K562 (cell line): ENCODE measurements at regions of chr4 and their contacts with region 1.

Region 1: DNA sequence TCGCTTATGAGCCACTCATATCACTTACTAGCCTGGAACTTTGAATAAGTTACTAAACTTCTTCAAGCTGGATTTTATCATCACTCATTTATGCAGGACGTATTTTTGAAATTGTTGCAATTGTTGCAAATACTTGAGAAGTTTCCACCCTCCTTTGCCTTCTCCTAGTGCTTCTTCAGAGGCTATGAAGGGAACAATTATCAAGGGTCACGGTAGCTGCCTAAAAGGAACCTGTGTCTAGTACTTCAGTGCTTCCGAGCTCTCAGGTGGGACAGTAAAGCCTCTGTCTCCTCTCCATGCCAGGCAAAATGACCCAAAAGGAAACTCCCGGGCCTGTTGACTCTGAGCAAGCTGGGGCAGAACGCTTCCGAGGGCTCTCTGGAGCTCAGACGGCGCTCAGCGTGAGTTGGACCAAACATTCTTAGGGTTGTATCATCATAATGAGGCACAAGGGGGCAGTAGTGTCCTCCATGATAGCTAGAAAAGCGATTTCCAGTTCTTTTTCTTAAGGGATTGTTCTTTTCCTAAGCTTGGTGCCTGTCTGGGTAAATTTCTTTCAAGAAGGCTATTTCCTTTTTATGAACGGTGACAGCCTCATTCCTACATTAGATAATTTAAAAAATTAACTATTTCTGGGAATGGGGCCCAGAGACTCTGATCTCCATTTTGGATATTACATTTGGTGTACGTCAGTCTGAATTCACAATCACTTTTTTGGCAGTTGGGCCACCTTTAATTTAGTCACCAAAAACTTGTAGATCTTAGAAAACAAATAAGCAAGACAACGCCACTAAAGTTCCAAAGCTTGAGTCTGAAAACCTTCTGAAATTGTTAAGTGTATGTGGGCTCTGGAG is 73.1 kb downstream of the PACRGL start:
- DNase-seq: peak; percentile 49 to 60 (median 50)
- ATAC-seq: peak; percentile 96
- H3K4me3 ChIP-seq: no peak overlapping the region
- H3K27ac ChIP-seq: no peak overlapping the region
- H3K4me1 ChIP-seq: no peaks in the 10 kb centered on the region
- H3K27me3 ChIP-seq: no peaks in the 10 kb centered on the region
- CTCF ChIP-seq: peak; percentile 56 to 71 (median 70)
- EP300 ChIP-seq: no peak
- POLR2A ChIP-seq: no peak
- RAD21 ChIP-seq: peak; percentile 30 to 57

Region 2: DNA sequence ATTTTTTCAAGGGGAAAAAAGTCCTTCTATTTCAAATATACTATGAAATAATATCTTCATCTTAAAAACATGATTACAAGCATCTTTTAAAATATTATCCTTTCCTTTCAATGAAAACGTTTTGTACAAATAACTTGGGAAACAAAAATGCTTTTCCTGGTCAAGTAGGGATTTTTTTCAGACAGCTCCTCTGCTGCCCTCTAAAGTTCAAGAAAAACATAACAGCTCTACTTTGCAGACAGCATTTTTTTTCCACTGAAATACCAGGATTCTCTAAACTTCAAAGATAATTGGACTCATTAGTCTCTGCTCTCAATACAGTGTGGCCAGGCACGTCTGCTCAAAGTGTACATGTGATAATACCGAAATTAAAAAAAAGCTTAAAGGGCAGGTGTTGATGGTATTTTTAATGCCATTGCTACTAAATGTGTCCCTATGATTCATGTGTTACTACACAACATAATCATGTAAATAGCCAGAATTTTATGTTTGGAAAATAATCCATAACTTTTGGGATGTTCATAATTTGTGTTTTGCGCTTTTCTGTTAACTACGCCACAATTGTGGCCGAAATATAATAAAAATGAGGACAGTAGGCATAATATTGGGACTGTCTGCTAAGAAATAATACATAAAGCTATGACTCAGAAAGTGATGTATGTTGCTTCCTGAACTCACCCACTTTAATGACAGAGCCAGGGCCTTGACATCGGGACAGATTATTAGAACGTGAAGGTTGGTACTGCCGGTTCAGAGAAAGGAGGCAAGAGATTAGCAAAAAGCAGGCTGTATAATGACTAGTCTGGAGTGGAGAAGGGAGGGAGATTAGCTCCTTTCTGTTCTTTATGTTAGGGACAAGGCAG is 696.3 kb after region 1 on chr4:
- CTCF ChIA-PET with region 1: no interaction called
- POLR2A ChIA-PET with region 1: no interaction called
- in situ Hi-C with region 1: no loop called
- intact Hi-C with region 1: loop called (anchors 5 kb)
- DNase-seq: no peak
- ATAC-seq: no peak
- H3K4me3 ChIP-seq: no peak overlapping the region
- H3K27ac ChIP-seq: no peak overlapping the region
- H3K4me1 ChIP-seq: no peaks in the 10 kb centered on the region
- H3K27me3 ChIP-seq: no peaks in the 10 kb centered on the region
- CTCF ChIP-seq: peak in 2 of 3 experiments; percentile 22 to 34; a peak in 2 of 6 replicates
- EP300 ChIP-seq: no peak
- POLR2A ChIP-seq: no peak
- RAD21 ChIP-seq: 0 out of 4 replicates have a peak, but pooled peaks of 1 of the 2 experiments have one; percentile 9